GM10248 (cell line): ENCODE measurements at regions of chr10 and their contacts with region 1.

Region 1: DNA sequence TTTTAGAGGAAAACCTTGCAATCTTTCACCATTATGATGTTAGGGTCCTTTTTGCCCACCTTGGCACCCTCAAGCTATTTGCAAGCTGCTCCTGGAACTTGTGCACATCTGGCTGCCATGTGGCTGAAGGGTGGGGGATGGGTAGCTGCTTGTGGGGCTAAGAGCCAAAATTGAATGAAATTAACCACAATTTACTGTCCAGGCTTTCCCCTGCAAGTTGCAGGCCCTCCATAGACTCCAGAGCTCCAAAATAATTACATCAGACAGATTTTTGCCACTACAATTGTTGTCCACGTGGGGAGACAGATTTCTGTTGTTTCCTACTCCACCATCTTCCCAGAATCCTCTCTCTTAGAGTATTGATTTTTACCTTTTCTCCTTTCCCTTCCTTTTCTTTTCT is 19.1 kb downstream of the PI4K2A start:
- DNase-seq: no peak
- CTCF ChIP-seq: no peak

Region 2: GRCh38 chr10:97463363-97464132 is 196.0 kb before region 1 on chr10:
- CTCF ChIA-PET with region 1: no interaction called
- POLR2A ChIA-PET with region 1: no interaction called
- DNase-seq: peak; percentile 58
- CTCF ChIP-seq: peak; percentile 75

Region 3: DNA sequence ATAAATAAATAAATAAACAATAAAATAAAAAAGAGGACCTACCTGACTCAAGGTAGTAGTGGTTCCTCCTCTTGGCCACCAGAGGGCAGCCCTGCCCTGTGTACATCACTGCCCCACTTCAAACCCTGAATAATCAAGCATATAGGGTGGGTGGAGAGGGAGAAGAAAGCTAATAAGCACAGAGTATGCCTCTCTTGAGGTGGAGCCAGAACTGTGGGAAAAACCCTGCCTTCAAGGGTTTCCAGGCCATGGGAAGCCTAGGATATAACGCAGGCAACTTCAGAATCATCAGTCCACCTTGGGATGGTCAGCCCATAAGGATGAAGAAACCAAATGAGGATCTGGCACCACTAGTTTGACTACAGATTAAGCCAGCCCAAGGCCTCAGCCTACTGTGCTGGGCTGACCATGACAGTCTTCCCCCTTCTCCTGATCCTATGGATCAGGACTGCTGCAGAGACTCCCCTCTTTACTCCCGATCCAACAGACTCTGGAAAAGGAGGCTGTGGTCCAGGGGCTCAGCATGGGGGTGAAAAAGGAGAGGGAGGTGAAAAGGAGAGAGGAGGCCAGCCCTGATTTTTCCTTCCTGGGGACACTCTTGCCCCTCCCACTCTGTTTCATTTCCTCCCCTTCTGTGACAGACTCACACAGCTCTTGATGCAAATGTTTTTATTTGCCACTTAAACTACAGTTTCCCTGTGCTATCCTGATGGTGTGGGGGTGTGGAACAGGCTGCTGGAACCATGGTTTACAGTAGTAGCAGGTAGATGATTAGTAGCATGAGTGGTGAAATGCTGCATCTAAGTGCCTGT is 17.4 kb after region 1 on chr10:
- CTCF ChIA-PET with region 1: interaction called, 18 read pairs
- POLR2A ChIA-PET with region 1: interaction called, 12 read pairs
- DNase-seq: peak; percentile 77
- CTCF ChIP-seq: peak; percentile 69